ENCODE measurements at regions of chr1 and their contacts with region 1.

Region 1: DNA sequence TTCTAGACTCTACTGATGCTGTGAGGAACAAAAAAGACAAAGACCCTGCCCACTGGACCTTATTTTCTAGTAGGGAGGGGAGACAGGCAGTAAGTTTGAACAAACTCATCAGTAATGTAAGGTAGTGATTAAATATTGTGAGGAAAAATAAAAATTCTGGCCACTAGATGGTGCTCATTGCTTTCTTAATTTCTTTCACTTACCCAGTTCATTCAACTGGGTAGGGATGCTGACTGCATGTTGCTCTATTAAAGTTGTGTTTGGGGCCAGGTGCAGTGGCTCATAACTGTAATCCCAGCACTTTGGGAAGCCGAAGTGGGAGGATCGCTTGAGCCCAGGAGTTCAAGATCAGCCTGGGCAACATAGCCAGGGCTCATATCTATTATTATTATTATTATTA is 6.3 kb upstream of the KYAT3 start:
- DNase-seq: no peak
- H3K4me3 ChIP-seq: no peak overlapping the region
- H3K27ac ChIP-seq: no peak overlapping the region
- H3K4me1 ChIP-seq: peaks cover 0 to 3% (median under 1%) of the 10 kb centered on the region in 4 experiments; a peak in 1 of 7 replicates
- H3K27me3 ChIP-seq: no peaks in the 10 kb centered on the region
- CTCF ChIP-seq: peak in 2 of 3 experiments; percentile 34 to 43; a peak in 3 of 4 replicates
- EP300 ChIP-seq: no peak
- POLR2A ChIP-seq: no peak
- RAD21 ChIP-seq: peak; percentile 80

Region 2: GRCh38 chr1:88791192-88791591 is 207.5 kb before region 1 on chr1:
- CTCF ChIA-PET with region 1: no interaction called
- POLR2A ChIA-PET with region 1: no interaction called
- DNase-seq: no peak
- H3K4me3 ChIP-seq: no peak overlapping the region
- H3K27ac ChIP-seq: no peak overlapping the region
- H3K4me1 ChIP-seq: no peaks in the 10 kb centered on the region
- H3K27me3 ChIP-seq: no peaks in the 10 kb centered on the region
- CTCF ChIP-seq: no peak
- EP300 ChIP-seq: no peak
- POLR2A ChIP-seq: no peak
- RAD21 ChIP-seq: no peak

Region 3: GRCh38 chr1:88983791-88984559 is 14.7 kb before region 1 on chr1:
- CTCF ChIA-PET with region 1: interaction called, 11 read pairs
- POLR2A ChIA-PET with region 1: no interaction called
- DNase-seq: no peak
- H3K4me3 ChIP-seq: no peak overlapping the region
- H3K27ac ChIP-seq: no peak overlapping the region
- H3K4me1 ChIP-seq: peaks cover 0 to 3% (median 0%) of the 10 kb centered on the region in 4 experiments; a peak in 1 of 7 replicates
- H3K27me3 ChIP-seq: no peaks in the 10 kb centered on the region
- CTCF ChIP-seq: peak in 2 of 3 experiments; percentile 39 to 51; a peak in 2 of 4 replicates
- EP300 ChIP-seq: no peak
- POLR2A ChIP-seq: no peak
- RAD21 ChIP-seq: peak; percentile 41 to 57

Region 4: GRCh38 chr1:89022167-89022959 is 23.6 kb after region 1 on chr1 and contains the start of gene GBP3:
- CTCF ChIA-PET with region 1: interaction called, 12 read pairs
- POLR2A ChIA-PET with region 1: no interaction called
- DNase-seq: no peak
- H3K4me3 ChIP-seq: no peak within 1 kb of the TSS
- H3K27ac ChIP-seq: no peak within 1 kb of the TSS
- H3K4me1 ChIP-seq: peaks cover 0 to 2% (median 0%) of the 10 kb centered on the region in 4 experiments; a peak in 3 of 7 replicates
- H3K27me3 ChIP-seq: no peaks in the 10 kb centered on the region
- CTCF ChIP-seq: no peak
- EP300 ChIP-seq: no peak
- POLR2A ChIP-seq: no peak
- RAD21 ChIP-seq: no peak
- total RNA-seq, gene GBP3: not detected in 2 replicates

Region 5: DNA sequence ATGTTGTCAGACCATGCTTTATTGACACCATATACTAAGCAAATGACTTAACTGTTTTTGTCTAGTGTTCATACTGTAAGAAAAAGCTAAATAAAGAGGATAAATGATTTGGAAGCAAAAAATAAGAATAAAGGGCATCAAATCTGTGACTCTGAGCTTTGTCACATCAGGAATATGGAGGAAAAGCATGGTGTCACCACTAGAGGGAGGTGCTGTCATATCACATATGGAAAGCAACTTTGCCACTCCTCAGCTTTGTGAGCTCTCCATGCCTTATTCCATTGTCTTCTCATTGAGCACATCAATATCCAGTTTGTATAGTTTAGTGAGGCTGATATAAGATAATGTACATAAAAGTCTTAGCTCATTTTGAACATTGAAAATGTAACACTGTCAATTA is 87.1 kb after region 1 on chr1:
- CTCF ChIA-PET with region 1: interaction called, 12 read pairs
- POLR2A ChIA-PET with region 1: no interaction called
- DNase-seq: no peak
- H3K4me3 ChIP-seq: no peak overlapping the region
- H3K27ac ChIP-seq: no peak overlapping the region
- H3K4me1 ChIP-seq: 0 out of 7 replicates have a peak, but pooled peaks cover 0 to 3% (median 0%) of the 10 kb centered on the region in 4 experiments
- H3K27me3 ChIP-seq: no peaks in the 10 kb centered on the region
- CTCF ChIP-seq: peak in 2 of 3 experiments; percentile 60 to 65; a peak in 3 of 4 replicates
- EP300 ChIP-seq: no peak
- POLR2A ChIP-seq: no peak
- RAD21 ChIP-seq: peak; percentile 84 to 85

Region 6: DNA sequence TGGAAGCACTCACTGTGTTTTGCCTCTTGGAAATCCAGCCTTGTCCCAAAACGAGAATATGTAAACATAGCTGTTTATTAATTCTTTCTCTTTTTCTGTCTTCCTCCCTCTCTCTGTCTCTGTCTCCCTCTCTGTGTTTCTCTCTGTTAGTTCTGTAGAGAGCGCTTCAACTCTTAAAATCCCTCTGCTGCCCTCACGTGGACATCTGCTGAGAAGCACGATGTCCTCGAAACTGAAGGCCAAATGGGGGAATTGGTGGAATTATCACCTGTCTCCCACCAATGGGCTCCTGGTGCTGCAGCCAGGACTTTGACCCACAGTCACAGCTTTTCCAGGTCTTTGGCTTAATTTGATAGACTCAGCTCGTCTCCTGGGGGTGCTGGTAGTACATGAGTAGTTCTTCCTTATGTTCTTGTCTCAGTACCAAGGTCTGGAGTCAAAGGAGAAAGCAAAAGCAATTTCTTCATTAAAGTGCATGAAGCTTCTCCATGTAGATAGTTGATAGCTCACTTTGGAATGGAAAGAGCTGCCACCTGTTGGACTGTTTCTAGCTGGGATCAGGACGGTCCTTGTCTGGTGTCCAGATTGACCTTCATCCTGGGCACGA is 359.7 kb after region 1 on chr1:
- CTCF ChIA-PET with region 1: interaction called, 20 read pairs
- POLR2A ChIA-PET with region 1: interaction called, 3 read pairs
- DNase-seq: peak; percentile 23 to 86
- H3K4me3 ChIP-seq: no peak overlapping the region
- H3K27ac ChIP-seq: no peak overlapping the region
- H3K4me1 ChIP-seq: 0 out of 7 replicates have a peak, but pooled peaks cover 0 to 2% (median 0%) of the 10 kb centered on the region in 4 experiments
- H3K27me3 ChIP-seq: no peaks in the 10 kb centered on the region
- CTCF ChIP-seq: peak; percentile 53 to 87 (median 87)
- EP300 ChIP-seq: no peak
- POLR2A ChIP-seq: no peak
- RAD21 ChIP-seq: peak; percentile 90 to 91

Region 7: GRCh38 chr1:89454845-89455521 is 456.3 kb after region 1 on chr1:
- CTCF ChIA-PET with region 1: interaction called, 42 read pairs
- POLR2A ChIA-PET with region 1: no interaction called
- DNase-seq: peak in 1 of 2 experiments; percentile 52
- H3K4me3 ChIP-seq: no peak overlapping the region
- H3K27ac ChIP-seq: no peak overlapping the region
- H3K4me1 ChIP-seq: peaks cover 0 to 5% (median 4%) of the 10 kb centered on the region in 4 experiments; a peak in 4 of 7 replicates
- H3K27me3 ChIP-seq: no peaks in the 10 kb centered on the region
- CTCF ChIP-seq: peak in 2 of 3 experiments; percentile 58 to 61; a peak in 3 of 4 replicates
- EP300 ChIP-seq: no peak
- POLR2A ChIP-seq: no peak
- RAD21 ChIP-seq: peak; percentile 92

Measured in H1 (cell line).